Activated naive CD4-positive, alpha-beta T cell treated with anti-CD3 and anti-CD28 coated beads, Interleukin-2, amount 10 ng/mL, durations not matched to agents 7 days and 5 days (primary cell): ENCODE measurements at regions of chr10 and their contacts with region 1.

Region 1: DNA sequence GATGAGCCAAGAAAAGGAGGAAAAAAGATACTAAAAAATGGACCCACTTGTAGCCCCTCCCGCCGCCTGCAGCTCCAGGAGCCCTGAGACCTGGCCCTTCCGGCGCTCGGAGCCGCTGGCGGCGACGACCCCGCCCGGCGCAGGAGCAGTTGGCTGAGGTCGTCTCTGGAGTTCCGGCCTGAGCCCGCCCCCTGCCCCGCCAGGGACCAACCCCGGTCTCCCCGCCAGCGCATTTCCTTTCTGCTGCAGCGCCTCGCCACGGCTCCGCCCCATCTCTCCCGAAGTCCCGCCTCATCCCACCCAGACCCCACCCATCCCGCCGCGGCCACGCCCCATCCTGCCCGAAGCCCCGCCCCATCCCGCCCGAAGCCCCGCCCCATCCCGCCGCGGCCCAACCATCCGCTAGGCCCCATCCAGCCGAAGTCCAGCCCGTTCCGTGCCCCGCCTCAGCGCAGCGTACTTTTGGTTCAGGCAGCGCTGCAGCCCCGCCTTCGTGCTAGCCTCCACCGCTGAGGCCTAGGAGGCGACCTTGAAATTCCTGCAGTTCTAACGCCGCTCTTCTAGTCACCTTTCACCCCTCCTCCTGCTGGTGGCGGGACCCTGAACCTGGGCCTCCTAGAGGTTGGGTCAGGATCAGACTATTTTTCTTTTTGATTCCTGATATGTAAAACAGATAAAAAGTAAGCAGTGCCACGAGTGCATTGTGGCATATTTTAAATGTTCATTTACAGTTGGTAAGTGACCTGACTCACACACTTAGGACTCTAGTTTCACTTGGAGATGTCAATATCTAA is at the start of gene STN1:
- DNase-seq: peak; percentile 97
- H3K4me3 Mint-ChIP-seq: peak within 1 kb of the TSS; percentile 84
- H3K27ac Mint-ChIP-seq: peak within 1 kb of the TSS; percentile 90
- H3K4me1 Mint-ChIP-seq: peaks cover 43% of the 10 kb centered on the region
- H3K27me3 Mint-ChIP-seq: no peaks in the 10 kb centered on the region

Region 2: DNA sequence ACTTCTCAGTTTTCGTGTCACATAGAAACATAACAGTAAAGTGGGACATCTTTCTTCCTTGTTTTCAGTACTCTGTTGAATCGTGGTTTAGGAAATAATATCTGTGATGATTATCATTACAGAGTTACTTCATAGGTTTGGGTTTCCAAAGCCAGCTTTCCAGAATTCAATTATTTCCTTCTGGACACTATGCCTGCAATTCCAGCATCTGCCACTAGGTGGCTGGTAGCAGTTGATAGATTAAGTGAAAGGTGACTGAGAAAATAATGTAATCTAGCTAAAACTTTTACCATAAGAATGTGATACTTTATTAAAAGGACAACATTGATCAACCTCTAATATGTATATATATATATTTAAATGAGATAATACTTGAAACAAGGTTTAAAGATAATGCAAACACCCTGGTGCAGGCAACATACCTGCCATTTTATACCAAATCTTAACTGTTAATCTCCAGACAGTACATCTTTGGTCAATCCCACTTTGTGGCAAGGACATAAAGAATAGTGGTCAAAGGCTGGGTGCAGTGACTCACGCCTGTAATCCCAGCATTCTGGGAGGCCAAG is 165.5 kb before region 1 on chr10:
- CTCF ChIA-PET with region 1: no interaction called
- DNase-seq: peak; percentile 40
- H3K4me3 Mint-ChIP-seq: no peak overlapping the region
- H3K27ac Mint-ChIP-seq: no peak overlapping the region
- H3K4me1 Mint-ChIP-seq: peaks cover 24% of the 10 kb centered on the region
- H3K27me3 Mint-ChIP-seq: peaks cover 34% of the 10 kb centered on the region

Region 3: DNA sequence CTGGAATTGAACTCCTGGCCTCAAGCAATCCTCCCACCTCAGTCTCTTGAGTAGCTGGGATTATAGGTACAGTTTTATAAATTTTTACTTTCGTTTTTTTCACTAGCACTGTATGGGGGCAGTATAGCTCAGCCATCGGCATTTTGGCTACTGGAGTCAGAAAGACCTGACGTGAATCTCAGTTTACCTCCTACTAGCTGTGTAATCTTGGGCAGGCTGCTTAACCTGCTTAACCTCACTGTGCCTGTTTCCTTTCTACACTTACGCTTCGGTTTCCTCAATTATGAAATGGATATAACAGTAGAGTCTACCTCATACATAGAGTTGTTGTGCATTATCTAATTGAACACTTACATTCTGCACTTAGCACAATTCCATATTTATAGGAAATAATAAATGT is 17.0 kb before region 1 on chr10:
- CTCF ChIA-PET with region 1: interaction called, 12 read pairs
- DNase-seq: no peak
- H3K4me3 Mint-ChIP-seq: no peak overlapping the region
- H3K27ac Mint-ChIP-seq: peak overlapping the region; percentile 8
- H3K4me1 Mint-ChIP-seq: peaks cover 51% of the 10 kb centered on the region
- H3K27me3 Mint-ChIP-seq: no peaks in the 10 kb centered on the region

Region 4: DNA sequence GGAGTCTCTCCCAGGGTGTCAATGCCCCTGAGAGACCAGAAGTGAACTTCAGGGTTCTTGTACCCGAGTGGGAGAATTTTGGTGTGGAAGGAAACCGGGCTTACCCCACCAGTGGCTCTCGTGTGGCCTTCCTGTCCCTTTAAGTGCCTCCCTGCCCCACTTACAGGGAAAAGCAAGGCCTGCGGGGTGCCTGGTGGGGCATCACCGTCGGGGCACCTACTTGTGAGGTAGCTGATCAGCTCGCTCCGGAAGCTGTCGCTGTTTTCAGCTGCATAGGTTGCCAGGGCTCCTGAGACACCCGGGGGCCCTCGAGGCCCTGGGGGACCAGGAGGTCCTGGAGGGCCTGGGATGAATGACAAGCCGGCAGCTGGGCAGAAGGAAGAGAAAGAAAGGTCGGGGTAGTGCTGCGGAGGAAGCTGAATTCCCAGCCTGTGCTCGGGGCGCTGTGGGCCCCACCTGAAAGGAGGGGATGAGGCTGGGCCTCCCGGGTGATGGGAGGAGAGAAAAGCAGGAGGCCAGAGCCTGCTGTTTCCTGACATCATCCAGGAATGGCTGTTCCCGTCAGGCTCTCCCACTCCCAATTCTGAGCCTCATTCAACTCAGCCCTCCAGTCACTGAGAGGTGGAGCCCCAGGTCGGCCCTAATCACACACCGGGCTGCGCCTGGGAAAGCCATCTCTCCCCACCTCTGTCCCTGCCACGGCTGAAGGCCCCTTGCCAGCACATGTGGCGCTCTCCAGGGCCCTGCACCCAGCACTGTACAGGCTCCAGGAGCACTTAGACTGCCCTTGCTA is 116.3 kb after region 1 on chr10:
- CTCF ChIA-PET with region 1: no interaction called
- DNase-seq: no peak
- H3K4me3 Mint-ChIP-seq: no peak overlapping the region
- H3K27ac Mint-ChIP-seq: no peak overlapping the region
- H3K4me1 Mint-ChIP-seq: no peaks in the 10 kb centered on the region
- H3K27me3 Mint-ChIP-seq: no peaks in the 10 kb centered on the region

Region 5: GRCh38 chr10:104121520-104122224 is 203.4 kb after region 1 on chr10 and contains the start of gene SFR1:
- CTCF ChIA-PET with region 1: interaction called, 18 read pairs
- DNase-seq: peak; percentile 99
- H3K4me3 Mint-ChIP-seq: peak within 1 kb of the TSS; percentile 82
- H3K27ac Mint-ChIP-seq: peak within 1 kb of the TSS; percentile 98
- H3K4me1 Mint-ChIP-seq: peaks cover 39% of the 10 kb centered on the region
- H3K27me3 Mint-ChIP-seq: peaks cover 15% of the 10 kb centered on the region